Activated B cell treated with CpG ODN at 0.5 μM for 24 hours (primary cell): ENCODE measurements at regions of chr15 and their contacts with region 1.

Region 1: DNA sequence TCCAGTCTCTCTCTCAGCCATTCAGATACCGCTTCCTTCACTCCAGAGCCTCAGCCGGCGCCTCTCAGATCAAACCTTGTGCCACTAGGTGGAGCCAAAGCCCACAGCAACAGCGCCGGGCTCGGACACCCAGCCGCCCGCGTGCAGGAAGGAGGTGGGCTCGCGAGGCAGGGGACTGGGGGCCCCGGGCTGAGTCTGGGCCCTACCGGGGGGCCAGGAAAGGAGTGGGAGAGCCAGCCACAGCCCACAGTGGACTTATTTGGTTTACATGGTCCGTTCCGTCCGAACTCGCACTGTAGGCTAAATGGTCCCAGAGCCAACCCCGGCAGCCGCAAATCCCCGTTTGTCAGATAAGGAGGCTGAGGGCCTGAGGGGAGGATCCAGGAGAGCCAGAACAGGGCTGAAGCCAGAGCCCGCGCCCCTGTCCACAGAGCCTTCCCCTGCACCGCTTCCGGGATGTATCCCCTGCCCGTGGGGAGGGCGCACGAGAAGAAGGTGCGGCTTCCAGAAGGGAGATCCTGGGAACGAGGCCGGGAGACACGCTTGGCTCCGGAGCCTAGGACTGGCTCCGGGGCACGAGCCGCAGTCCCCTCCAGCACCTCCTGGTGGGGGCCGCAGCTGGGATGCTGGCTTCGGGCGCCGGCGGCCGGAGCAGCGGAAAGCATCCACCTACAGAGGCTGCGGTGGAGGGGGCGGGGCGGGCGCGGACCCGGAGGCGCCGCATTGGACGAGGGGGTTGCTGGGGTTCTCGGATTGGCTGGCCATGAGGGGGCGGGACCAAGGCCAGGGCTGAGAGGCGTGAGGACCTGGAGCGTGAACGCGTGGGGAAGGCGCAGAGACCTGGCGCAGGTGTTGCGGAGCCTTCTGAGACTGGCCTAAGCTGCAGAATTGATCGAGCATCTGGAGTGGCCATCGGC is 6.5 kb upstream of the CYP11A1 start:
- DNase-seq: peak; percentile 89
- ATAC-seq: peak; percentile 94
- H3K4me3 Mint-ChIP-seq: peak overlapping the region; percentile 81
- H3K27ac Mint-ChIP-seq: peak overlapping the region; percentile 12
- H3K4me1 Mint-ChIP-seq: peaks cover 29% of the 10 kb centered on the region
- H3K27me3 Mint-ChIP-seq: peaks cover 9% of the 10 kb centered on the region
- CTCF ChIP-seq: peak; percentile 32

Region 2: DNA sequence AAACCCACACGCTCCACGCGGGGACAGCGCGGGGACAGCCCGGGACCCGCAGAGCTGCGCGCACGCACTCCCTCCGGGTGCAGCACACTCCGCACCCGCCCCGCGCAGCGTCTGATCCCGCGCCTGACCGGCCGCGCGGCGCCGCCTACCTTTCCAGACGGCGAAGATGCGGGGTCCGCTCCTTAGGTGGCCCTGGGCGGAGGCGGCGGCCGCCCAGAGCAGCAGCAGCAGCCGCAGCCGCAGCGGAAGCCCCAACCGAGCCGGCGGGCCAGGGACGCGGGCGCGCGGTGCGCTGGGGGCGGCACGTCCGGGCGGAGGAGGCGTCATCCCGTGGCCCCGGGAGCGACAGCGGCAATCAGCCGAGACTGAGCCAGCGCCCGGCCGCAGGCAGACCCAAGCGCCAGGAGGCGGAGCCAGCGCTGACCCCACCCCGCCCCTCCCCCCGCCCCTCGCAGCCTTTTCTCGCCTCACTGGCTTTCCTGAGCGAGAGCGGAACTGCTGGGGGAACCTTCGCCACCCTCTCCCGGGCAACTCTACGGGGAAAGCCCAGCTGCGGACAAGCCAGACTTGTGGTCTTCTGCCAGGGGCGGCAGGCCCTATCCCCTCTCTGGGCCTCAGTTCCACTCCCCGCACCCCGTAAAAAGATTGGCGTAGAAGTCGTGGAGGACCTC is 59.7 kb after region 1 on chr15 and contains the start of gene SEMA7A:
- CTCF ChIA-PET with region 1: interaction called, 403 read pairs
- POLR2A ChIA-PET with region 1: interaction called, 10 read pairs
- intact Hi-C with region 1: loop called (anchors 1 kb)
- DNase-seq: peak; percentile 83
- ATAC-seq: peak; percentile 80
- H3K4me3 Mint-ChIP-seq: peak within 1 kb of the TSS; percentile 96
- H3K27ac Mint-ChIP-seq: peak within 1 kb of the TSS; percentile 90
- H3K4me1 Mint-ChIP-seq: peaks cover 76% of the 10 kb centered on the region
- H3K27me3 Mint-ChIP-seq: no peaks in the 10 kb centered on the region
- CTCF ChIP-seq: no peak
- total RNA-seq, gene SEMA7A: 159 and 178 TPM in 2 replicates

Region 3: DNA sequence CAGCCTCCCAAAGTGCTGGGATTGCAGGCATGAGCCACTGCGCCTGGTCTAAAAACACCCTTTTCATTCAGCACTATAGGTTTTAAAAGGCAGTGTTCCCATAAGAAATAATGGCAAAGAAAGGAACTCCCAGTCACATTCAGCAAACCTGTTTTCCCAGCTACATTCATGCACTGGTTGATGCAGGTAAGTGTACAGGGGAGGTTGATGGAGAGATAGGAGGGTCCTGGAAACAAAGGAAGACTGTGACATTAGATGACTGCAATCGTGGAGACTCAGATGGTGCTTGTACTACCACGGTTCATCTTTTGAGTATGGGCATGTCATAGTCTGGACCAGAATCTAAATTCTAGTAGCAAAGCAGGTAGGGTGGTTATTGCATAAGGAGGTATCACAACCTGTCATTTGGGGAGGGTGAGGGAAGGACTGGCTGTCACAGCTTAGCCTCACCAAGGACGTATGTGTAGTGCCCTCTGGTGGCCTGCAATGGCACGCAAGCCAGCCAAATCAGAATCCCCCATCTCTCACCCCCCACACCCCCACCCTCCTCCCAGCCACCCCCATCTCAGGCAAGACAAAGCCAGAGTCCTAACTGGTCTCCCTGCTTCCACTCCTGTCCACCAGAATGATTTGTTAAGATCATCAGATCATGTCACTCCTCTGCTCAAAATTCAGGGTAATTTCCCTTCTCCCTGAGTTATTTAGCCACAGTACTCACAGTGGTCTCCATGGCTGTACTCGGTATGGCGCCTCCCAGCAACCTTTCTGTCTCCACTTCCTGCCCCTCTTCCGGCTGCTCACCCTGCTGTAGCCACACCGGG is 115.7 kb after region 1 on chr15:
- CTCF ChIA-PET with region 1: interaction called, 16 read pairs
- POLR2A ChIA-PET with region 1: interaction called, 4 read pairs
- intact Hi-C with region 1: loop called (anchors 1 kb)
- DNase-seq: peak; percentile 60
- ATAC-seq: peak; percentile 96
- H3K4me3 Mint-ChIP-seq: peak overlapping the region; percentile 51
- H3K27ac Mint-ChIP-seq: peak overlapping the region; percentile 8
- H3K4me1 Mint-ChIP-seq: peaks cover 11% of the 10 kb centered on the region
- H3K27me3 Mint-ChIP-seq: no peaks in the 10 kb centered on the region
- CTCF ChIP-seq: peak; percentile 25

Region 4: DNA sequence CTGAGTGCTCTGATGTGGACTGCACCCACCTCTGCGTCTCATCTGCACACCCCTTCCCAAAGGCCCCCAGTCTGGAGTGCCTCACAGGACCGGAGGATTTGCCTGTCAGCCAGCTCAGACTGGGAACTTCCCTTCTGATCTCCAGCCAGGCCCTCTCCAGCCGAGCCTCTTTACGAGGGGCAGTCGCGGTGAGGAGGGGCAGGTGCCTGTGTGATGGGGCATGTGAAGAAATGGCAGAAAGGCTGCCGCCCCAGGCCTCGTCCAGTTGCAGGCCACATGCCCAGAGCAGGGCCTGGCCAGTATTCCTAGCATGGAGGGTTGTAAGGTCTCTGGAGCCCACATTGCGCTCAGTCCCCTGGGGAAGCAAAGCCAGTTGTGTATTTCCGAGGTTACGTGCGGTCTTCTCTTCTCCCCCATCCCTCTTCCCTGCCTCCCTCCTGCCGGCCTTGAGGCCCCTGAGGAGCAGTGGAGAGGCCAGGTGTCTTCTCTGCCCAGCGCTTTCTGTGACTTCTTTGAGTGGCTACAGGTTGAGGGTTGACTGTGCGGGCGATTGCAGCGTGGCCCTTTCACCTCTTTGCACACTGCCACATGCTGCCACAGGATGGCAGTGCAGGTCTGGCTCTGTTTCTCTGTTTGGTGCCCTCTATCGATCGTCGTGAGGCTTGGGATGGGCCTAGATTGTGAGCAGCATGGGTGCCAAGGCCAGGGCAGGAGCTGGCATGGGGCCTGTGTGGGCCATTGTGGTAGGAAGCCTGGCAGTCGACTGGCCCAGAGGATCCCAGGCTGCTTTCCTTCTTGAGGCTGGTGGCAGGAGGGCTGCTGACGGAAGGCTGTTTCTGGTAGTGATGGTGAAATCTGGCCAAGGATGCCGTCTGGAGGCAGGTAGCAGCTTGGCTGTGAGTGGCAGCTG is 246.9 kb after region 1 on chr15:
- CTCF ChIA-PET with region 1: interaction called, 5 read pairs
- POLR2A ChIA-PET with region 1: no interaction called
- intact Hi-C with region 1: loop called (anchors 1 kb)
- DNase-seq: peak; percentile 59
- ATAC-seq: peak; percentile 97
- H3K4me3 Mint-ChIP-seq: no peak overlapping the region
- H3K27ac Mint-ChIP-seq: peak overlapping the region; percentile 5
- H3K4me1 Mint-ChIP-seq: peaks cover 54% of the 10 kb centered on the region
- H3K27me3 Mint-ChIP-seq: no peaks in the 10 kb centered on the region
- CTCF ChIP-seq: peak; percentile 59

Region 5: GRCh38 chr15:74950078-74951000 is 576.4 kb after region 1 on chr15:
- CTCF ChIA-PET with region 1: interaction called, 3 read pairs
- POLR2A ChIA-PET with region 1: no interaction called
- intact Hi-C with region 1: loop called (anchors 5 kb)
- DNase-seq: peak; percentile 54
- ATAC-seq: peak; percentile 99
- H3K4me3 Mint-ChIP-seq: no peak overlapping the region
- H3K27ac Mint-ChIP-seq: no peak overlapping the region
- H3K4me1 Mint-ChIP-seq: peaks cover 4% of the 10 kb centered on the region
- H3K27me3 Mint-ChIP-seq: no peaks in the 10 kb centered on the region
- CTCF ChIP-seq: peak; percentile 24